Right cardiac atrium (tissue), 5 donors: ENCODE measurements at regions of chr19 and their contacts with region 1.

Region 1: DNA sequence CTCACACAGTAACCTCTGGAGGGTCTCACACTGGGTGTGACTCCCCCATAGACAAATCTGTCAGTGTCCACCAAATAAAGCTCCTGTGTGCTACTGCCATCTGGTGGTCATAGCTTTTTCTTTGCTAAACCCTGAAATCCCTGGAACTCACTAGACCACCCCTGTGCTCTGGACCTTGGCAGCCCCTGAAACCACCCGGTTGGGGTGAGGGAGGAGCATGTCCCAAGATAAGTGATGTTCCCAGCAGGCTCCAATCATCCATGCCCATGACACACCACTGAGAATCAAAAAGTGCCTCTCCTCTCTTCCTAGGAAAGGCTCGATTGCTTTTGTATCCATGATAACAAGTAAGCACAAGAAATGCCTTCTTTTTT is 6.5 kb upstream of the HSD17B14 start:
- DNase-seq: no peak
- ATAC-seq: peak; percentile 46 to 57
- H3K4me3 ChIP-seq: no peak overlapping the region
- H3K27ac ChIP-seq: no peak overlapping the region
- H3K4me1 ChIP-seq: no peaks in the 10 kb centered on the region
- H3K27me3 ChIP-seq: no peaks in the 10 kb centered on the region

Region 2: DNA sequence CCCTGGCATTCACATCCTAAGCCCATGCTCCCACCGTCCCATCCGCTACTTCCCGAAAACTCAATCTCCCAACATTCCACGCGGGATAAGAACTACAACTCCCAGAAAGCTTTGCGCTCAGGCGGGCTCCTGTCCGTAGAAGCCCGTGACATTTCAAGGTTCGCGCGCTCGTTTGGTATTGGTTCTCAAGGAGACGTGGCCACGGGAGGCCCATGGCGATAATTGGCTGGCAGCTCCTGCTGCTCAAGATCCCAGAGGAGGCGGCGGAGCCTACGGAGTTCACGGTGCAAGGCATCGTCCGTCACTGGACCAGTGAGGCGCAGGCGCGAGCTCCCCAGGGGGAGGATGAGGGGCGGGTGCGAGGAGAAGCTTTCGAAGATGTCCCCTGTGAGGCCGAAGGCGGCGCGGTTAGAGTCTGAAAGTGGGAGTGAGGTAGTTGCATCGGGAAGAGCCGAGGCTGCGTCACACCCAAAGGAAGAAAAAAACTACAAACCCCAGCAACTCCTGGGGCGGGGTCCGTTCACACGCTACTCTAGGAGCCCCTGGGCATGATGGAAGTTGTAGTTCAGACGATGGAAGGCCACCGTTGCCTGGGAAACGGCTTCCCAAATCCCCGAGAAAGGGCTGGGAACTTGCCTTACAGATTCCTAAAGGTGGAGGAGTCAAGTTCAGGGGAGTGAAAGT is 122.0 kb before region 1 on chr19:
- intact Hi-C with region 1: no loop called
- DNase-seq: peak; percentile 98 to 100 (median 99)
- ATAC-seq: peak; percentile 74 to 87
- H3K4me3 ChIP-seq: peak overlapping the region; percentile 39
- H3K27ac ChIP-seq: peak overlapping the region; percentile 92
- H3K4me1 ChIP-seq: peaks cover 17% of the 10 kb centered on the region
- H3K27me3 ChIP-seq: no peaks in the 10 kb centered on the region

Region 3: GRCh38 chr19:48780631-48781391 is 62.0 kb before region 1 on chr19:
- intact Hi-C with region 1: loop called in 1 of 4 experiments (anchors 5 kb)
- DNase-seq: peak in 1 of 3 donors; percentile 28
- ATAC-seq: peak; percentile 4 to 30
- H3K4me3 ChIP-seq: no peak overlapping the region
- H3K27ac ChIP-seq: peak overlapping the region; percentile 39
- H3K4me1 ChIP-seq: peaks cover 2% of the 10 kb centered on the region
- H3K27me3 ChIP-seq: no peaks in the 10 kb centered on the region

Region 4: DNA sequence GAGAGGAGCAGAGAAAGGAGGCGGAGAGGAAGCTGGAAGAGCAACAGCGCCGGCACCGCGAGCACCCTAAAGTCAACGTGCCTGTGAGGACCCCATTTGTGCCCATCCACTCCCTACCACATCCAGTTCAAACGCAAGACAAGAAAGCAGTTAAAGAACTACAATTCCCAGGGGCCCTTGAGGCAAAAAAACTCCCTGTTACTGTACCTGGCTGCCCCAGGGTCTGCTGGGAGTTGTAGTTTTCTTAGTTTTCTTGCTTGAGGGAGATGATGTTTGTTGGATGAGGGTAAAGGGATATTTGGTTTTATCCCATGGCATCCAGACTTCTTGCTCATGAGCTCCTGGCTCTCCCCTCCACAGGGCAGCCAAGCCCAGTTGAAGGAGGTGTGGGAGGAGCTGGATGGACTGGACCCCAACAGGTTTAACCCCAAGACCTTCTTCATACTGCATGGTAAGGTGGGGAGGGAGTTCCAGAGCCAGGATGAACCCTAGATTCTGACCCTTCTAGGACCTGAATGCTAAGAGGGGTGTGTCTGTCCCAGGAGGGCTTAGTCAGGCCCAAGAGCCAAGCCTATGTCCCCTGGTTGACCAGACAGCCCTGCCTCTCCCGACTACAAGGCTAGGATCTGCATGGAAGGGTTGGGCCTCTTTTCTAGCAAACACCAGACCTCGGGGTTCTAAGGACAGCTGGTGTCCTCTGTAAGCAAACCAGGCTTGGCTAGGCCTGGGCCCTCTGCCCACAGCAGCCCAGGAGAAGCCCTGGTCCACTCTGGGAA is 70.5 kb after region 1 on chr19:
- intact Hi-C with region 1: no loop called
- DNase-seq: peak in 1 of 3 donors; percentile 9
- ATAC-seq: no peak
- H3K4me3 ChIP-seq: no peak overlapping the region
- H3K27ac ChIP-seq: no peak overlapping the region
- H3K4me1 ChIP-seq: no peaks in the 10 kb centered on the region
- H3K27me3 ChIP-seq: no peaks in the 10 kb centered on the region

Region 5: DNA sequence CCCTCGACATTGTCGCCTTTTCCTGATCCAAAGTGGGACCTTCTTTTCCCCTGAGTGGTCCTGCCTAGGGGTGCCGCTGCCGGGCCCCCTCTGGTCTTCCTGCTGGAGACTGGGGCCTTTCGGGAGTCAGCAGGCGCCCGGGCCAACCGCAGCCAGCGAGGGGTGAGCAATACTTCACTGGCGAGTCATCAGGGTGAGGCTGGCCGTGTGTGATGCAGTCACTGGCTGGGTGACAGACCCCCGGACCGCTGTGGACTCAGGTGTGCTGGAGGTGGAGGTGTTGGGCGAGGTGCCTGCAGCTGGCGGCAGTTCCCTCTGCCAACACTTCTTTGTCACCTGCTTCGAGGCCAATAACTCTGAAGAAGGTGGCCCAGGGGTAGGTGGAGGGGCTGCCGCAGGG is 199.4 kb after region 1 on chr19:
- intact Hi-C with region 1: no loop called
- DNase-seq: no peak
- ATAC-seq: no peak
- H3K4me3 ChIP-seq: no peak overlapping the region
- H3K27ac ChIP-seq: no peak overlapping the region
- H3K4me1 ChIP-seq: no peaks in the 10 kb centered on the region
- H3K27me3 ChIP-seq: no peaks in the 10 kb centered on the region